ENCODE measurements at regions of chr17 and their contacts with region 1.

Region 1: DNA sequence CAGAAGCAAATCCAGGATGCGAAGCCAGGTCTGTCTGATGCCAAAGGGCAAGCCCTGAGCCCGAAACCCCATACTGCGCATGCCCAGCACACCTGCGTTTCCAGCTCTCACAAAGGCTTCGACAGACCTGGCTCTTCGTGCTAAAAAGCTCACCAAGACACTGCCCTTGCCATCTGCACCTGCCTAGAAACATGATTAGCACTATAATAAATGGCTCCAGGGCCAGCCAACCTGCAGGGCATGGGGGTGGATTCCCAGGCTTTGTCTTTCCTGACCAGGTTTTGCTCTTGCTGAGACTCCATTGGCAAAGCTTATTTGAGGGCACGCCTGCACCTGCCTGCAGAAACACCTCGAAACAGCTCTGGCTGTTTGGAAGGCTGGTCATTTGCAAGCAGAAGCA is 14.4 kb upstream of the PLD6 start:
- DNase-seq: no peak
- ATAC-seq: no peak
- H3K4me3 ChIP-seq: no peak overlapping the region
- H3K27ac ChIP-seq: no peak overlapping the region
- H3K4me1 ChIP-seq: no peaks in the 10 kb centered on the region
- H3K27me3 ChIP-seq: no peaks in the 10 kb centered on the region
- CTCF ChIP-seq: no peak

Region 2: DNA sequence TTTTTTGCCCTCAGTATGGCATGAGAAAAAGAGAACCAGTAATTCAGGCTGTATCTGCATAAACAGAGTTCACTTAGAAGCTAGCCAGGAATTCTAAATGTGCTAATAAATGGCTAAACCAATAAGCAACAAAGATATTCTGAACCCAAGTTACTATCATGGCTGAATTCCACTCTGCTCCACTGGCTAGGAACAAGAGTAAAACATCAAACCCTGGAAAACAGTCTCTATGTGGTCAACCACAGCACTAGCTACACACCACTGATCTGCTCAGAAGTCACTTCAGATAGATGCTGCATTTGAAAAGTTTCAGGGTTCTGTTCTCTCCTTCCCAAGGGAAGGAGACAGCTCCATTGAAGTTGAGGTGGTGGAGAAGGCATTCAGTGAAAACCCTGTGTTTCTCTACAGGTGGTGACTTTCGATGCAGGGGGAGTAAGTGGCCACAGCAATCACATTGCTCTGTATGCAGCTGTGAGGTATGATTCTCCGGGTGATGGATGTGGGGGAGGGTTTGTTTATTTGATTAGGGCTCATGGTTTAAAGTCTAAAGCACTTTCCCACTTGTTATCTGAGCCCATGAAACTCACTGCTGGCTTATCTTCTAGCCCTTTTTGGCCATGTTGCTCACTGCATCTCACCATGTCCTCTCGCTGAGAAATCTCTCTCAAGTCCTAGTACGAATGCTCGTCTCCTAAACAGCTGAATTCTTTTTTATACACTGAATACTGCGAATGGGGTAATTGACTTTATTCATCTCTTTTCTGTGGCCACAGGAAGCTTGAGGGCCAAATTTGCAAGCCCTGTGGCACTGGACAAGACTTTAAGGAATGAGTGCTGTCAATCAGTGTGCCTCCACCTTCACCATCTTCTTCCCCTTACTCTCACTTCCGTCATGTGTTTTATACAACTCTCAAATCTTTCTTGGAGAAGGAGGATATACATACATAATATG is 907.1 kb before region 1 on chr17:
- intact Hi-C with region 1: loop called in 1 of 10 experiments (anchors 5 kb)
- DNase-seq: no peak
- ATAC-seq: no peak
- H3K4me3 ChIP-seq: no peak overlapping the region
- H3K27ac ChIP-seq: no peak overlapping the region
- H3K4me1 ChIP-seq: no peaks in the 10 kb centered on the region
- H3K27me3 ChIP-seq: no peaks in the 10 kb centered on the region
- CTCF ChIP-seq: no peak

Region 3: GRCh38 chr17:17141860-17142552 is 78.5 kb before region 1 on chr17:
- intact Hi-C with region 1: no loop called
- DNase-seq: no peak
- ATAC-seq: peak in 5 of 8 donors; percentile 38 to 55 (median 49)
- H3K4me3 ChIP-seq: no peak overlapping the region
- H3K27ac ChIP-seq: peak overlapping the region in 6 of 10 donors; percentile 0 to 60 (median 16)
- H3K4me1 ChIP-seq: peaks cover 5 to 58% (median 23%) of the 10 kb centered on the region in 9 donors
- H3K27me3 ChIP-seq: no peaks in the 10 kb centered on the region
- CTCF ChIP-seq: peak; percentile 59 to 85 (median 81)

Measured in heart right ventricle (tissue), 16 donors.